ENCODE measurements at regions of chr7 and their contacts with region 1.

Region 1: GRCh38 chr7:94223375-94224070 is 171.2 kb upstream of the COL1A2 start:
- DNase-seq: peak; percentile 69
- ATAC-seq: peak; percentile 97
- H3K4me3 ChIP-seq: no peak overlapping the region
- H3K27ac ChIP-seq: no peak overlapping the region
- H3K4me1 ChIP-seq: peaks cover 5% of the 10 kb centered on the region
- H3K27me3 ChIP-seq: no peaks in the 10 kb centered on the region
- CTCF ChIP-seq: peak; percentile 86
- POLR2A ChIP-seq: 0 out of 2 replicates have a peak, but pooled peaks have one; percentile 39
- RAD21 ChIP-seq: peak; percentile 92

Region 2: DNA sequence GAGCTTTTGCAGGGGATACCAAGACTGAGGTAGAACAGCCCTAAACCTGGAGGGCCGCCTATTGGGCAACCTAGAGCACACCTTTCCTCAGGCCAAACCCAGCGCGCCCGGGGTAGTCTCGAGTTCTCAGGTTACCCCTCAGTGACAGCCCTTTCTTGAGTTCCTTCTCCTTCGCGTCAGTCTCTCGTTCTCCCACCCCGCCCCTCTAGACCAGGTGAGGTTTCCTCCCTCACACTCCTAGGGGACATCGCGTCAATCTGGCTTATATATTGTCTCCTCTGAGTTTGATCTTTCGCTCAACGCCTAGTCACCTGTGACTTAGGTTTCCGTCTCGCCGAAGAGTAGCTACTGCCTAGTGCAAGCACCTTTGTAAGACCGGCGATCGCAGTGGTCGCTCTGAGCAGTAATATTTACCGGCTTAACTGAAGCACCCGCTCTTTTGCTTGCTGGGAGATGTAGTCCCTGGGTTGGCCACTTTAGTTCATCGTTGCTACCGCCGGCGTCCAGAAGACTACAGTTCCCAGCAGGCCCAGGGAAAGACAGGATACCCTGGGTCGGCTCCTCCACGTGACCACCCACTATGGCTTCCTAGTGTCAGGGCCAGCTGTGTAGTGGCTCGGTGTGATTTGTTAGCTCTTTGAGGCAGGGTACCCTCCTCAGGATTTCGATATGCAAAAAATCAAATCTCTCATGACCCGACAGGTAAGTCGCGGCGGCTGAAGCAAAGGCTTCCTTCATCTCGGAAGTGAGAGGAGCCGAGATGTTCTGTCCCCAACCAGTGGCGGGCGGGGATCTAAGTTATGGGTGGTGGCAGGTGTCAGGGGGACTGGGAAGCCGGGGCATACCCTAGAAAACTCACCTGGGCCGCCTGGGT is 991.5 kb before region 1 on chr7 and contains the start of gene VPS50:
- CTCF ChIA-PET with region 1: no interaction called
- POLR2A ChIA-PET with region 1: no interaction called
- dilution Hi-C with region 1: no loop called
- in situ Hi-C with region 1: loop called (anchors 25 kb)
- intact Hi-C with region 1: no loop called
- DNase-seq: peak; percentile 93
- ATAC-seq: peak; percentile 100
- H3K4me3 ChIP-seq: peak within 1 kb of the TSS; percentile 80
- H3K27ac ChIP-seq: peak within 1 kb of the TSS; percentile 64
- H3K4me1 ChIP-seq: no peaks in the 10 kb centered on the region
- H3K27me3 ChIP-seq: peaks cover under 1% of the 10 kb centered on the region; the same call in 1 of the 2 replicates
- CTCF ChIP-seq: no peak
- POLR2A ChIP-seq: no peak
- RAD21 ChIP-seq: no peak
- total RNA-seq, gene VPS50: 22.0 and 26.7 TPM in 2 replicates

Region 3: GRCh38 chr7:93442478-93443224 is 780.9 kb before region 1 on chr7:
- CTCF ChIA-PET with region 1: no interaction called
- POLR2A ChIA-PET with region 1: no interaction called
- dilution Hi-C with region 1: no loop called
- in situ Hi-C with region 1: no loop called
- intact Hi-C with region 1: loop called (anchors 10 kb)
- DNase-seq: peak; percentile 13
- ATAC-seq: peak; percentile 63; the same call in 1 of the 2 replicates
- H3K4me3 ChIP-seq: no peak overlapping the region
- H3K27ac ChIP-seq: no peak overlapping the region
- H3K4me1 ChIP-seq: no peaks in the 10 kb centered on the region
- H3K27me3 ChIP-seq: no peaks in the 10 kb centered on the region; the same call in 1 of the 2 replicates
- CTCF ChIP-seq: peak; percentile 52
- POLR2A ChIP-seq: no peak
- RAD21 ChIP-seq: 0 out of 2 replicates have a peak, but pooled peaks have one; percentile 29

Region 4: GRCh38 chr7:93715234-93715633 is 508.3 kb before region 1 on chr7:
- CTCF ChIA-PET with region 1: no interaction called
- POLR2A ChIA-PET with region 1: no interaction called
- dilution Hi-C with region 1: no loop called
- in situ Hi-C with region 1: loop called (anchors 10 kb)
- intact Hi-C with region 1: loop called (anchors 1 kb)
- DNase-seq: peak; percentile 39
- ATAC-seq: peak; percentile 82
- H3K4me3 ChIP-seq: no peak overlapping the region
- H3K27ac ChIP-seq: no peak overlapping the region
- H3K4me1 ChIP-seq: no peaks in the 10 kb centered on the region
- H3K27me3 ChIP-seq: no peaks in the 10 kb centered on the region; the same call in 1 of the 2 replicates
- CTCF ChIP-seq: peak; percentile 62
- POLR2A ChIP-seq: no peak
- RAD21 ChIP-seq: peak; percentile 63

Region 5: GRCh38 chr7:93902777-93903423 is 320.6 kb before region 1 on chr7:
- CTCF ChIA-PET with region 1: no interaction called
- POLR2A ChIA-PET with region 1: no interaction called
- dilution Hi-C with region 1: no loop called
- in situ Hi-C with region 1: no loop called
- intact Hi-C with region 1: loop called (anchors 1 kb)
- DNase-seq: peak; percentile 75
- ATAC-seq: peak; percentile 85
- H3K4me3 ChIP-seq: no peak overlapping the region
- H3K27ac ChIP-seq: no peak overlapping the region
- H3K4me1 ChIP-seq: peaks cover 2% of the 10 kb centered on the region; the same call in 1 of the 2 replicates
- H3K27me3 ChIP-seq: no peaks in the 10 kb centered on the region
- CTCF ChIP-seq: peak; percentile 86
- POLR2A ChIP-seq: no peak
- RAD21 ChIP-seq: peak; percentile 84

Region 6: GRCh38 chr7:93949461-93949860 is 274.1 kb before region 1 on chr7:
- CTCF ChIA-PET with region 1: no interaction called
- POLR2A ChIA-PET with region 1: no interaction called
- dilution Hi-C with region 1: no loop called
- in situ Hi-C with region 1: no loop called
- intact Hi-C with region 1: no loop called
- DNase-seq: peak; percentile 90
- ATAC-seq: peak; percentile 76
- H3K4me3 ChIP-seq: no peak overlapping the region
- H3K27ac ChIP-seq: no peak overlapping the region
- H3K4me1 ChIP-seq: peaks cover 15% of the 10 kb centered on the region
- H3K27me3 ChIP-seq: no peaks in the 10 kb centered on the region
- CTCF ChIP-seq: no peak
- POLR2A ChIP-seq: no peak
- RAD21 ChIP-seq: no peak

Region 7: GRCh38 chr7:94004024-94004951 is 219.2 kb before region 1 on chr7 and contains the start of gene BET1:
- CTCF ChIA-PET with region 1: no interaction called
- POLR2A ChIA-PET with region 1: no interaction called
- dilution Hi-C with region 1: no loop called
- in situ Hi-C with region 1: no loop called
- intact Hi-C with region 1: loop called (anchors 1 kb)
- DNase-seq: peak; percentile 97
- ATAC-seq: peak; percentile 98
- H3K4me3 ChIP-seq: peak within 1 kb of the TSS; percentile 73
- H3K27ac ChIP-seq: peak within 1 kb of the TSS; percentile 84
- H3K4me1 ChIP-seq: peaks cover 2% of the 10 kb centered on the region; the same call in 1 of the 2 replicates
- H3K27me3 ChIP-seq: no peaks in the 10 kb centered on the region
- CTCF ChIP-seq: no peak
- POLR2A ChIP-seq: peak; percentile 84
- RAD21 ChIP-seq: no peak
- total RNA-seq, gene BET1: 9.9 and 36.4 TPM in 2 replicates

Region 8: GRCh38 chr7:94190599-94191061 is 32.9 kb before region 1 on chr7:
- CTCF ChIA-PET with region 1: no interaction called
- POLR2A ChIA-PET with region 1: no interaction called
- dilution Hi-C with region 1: no loop called
- in situ Hi-C with region 1: no loop called
- intact Hi-C with region 1: no loop called
- DNase-seq: peak; percentile 98
- ATAC-seq: peak; percentile 97
- H3K4me3 ChIP-seq: no peak overlapping the region
- H3K27ac ChIP-seq: peak overlapping the region; percentile 0; the same call in 1 of the 2 replicates
- H3K4me1 ChIP-seq: peaks cover 2% of the 10 kb centered on the region; the same call in 1 of the 2 replicates
- H3K27me3 ChIP-seq: no peaks in the 10 kb centered on the region
- CTCF ChIP-seq: no peak
- POLR2A ChIP-seq: no peak
- RAD21 ChIP-seq: peak; percentile 27; the same call in 1 of the 2 replicates